ENCODE measurements at regions of chr3 and their contacts with region 1.

Region 1: DNA sequence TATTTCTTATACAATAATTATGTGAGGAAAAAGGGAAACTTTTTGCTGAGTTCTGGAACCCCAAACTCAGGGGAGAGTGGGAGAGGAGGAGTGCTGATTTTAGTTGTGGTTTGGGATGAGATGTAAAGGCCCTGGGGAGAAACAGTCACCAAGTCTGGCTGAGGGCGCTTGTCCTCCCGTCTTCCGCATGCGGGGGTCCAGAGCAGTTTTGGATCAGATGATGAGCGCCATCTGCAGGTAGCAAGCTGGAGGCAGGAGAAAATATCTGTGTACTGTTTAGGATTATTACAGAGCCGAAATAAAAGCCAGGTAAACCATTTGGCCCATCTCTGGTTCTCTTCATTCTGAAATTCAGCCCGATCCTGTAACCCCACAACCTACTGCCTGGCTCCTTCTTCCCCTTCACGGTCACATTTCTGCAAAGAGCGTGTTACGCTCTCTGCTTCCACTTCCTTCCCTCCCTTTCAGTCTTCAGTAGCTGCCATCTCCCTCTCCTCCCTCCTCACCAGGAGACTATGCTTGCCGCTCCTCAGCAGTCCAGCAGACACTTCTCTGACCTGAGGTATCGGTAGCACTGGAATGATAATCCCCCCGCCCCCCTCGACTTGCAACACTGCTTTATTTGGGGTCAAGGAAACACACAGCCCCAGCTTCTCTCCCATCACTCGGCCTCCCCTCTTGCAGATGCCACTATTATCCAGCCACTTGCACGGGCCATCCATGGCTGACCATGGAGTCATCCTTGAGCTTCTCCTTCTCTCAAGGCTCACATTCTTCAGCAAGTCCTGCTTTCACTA is 1.4 kb upstream of the PARP14 start:
- DNase-seq: peak; percentile 64
- ATAC-seq: peak; percentile 79
- H3K4me3 ChIP-seq: peak overlapping the region; percentile 90 to 97 (median 93)
- H3K27ac ChIP-seq: no peak overlapping the region
- H3K4me1 ChIP-seq: peaks cover 29% of the 10 kb centered on the region
- H3K27me3 ChIP-seq: no peaks in the 10 kb centered on the region; a peak in 1 of 5 replicates
- CTCF ChIP-seq: peak; percentile 88
- EP300 ChIP-seq: no peak
- POLR2A ChIP-seq: no peak
- RAD21 ChIP-seq: peak; percentile 83

Region 2: GRCh38 chr3:121574449-121574848 is 1104.8 kb before region 1 on chr3:
- CTCF ChIA-PET with region 1: no interaction called
- POLR2A ChIA-PET with region 1: no interaction called
- in situ Hi-C with region 1: loop called (anchors 25 kb)
- intact Hi-C with region 1: no loop called
- DNase-seq: peak; percentile 58
- ATAC-seq: peak; percentile 77
- H3K4me3 ChIP-seq: no peak overlapping the region
- H3K27ac ChIP-seq: no peak overlapping the region
- H3K4me1 ChIP-seq: no peaks in the 10 kb centered on the region
- H3K27me3 ChIP-seq: no peaks in the 10 kb centered on the region
- CTCF ChIP-seq: no peak
- EP300 ChIP-seq: no peak
- POLR2A ChIP-seq: no peak
- RAD21 ChIP-seq: no peak

Region 3: DNA sequence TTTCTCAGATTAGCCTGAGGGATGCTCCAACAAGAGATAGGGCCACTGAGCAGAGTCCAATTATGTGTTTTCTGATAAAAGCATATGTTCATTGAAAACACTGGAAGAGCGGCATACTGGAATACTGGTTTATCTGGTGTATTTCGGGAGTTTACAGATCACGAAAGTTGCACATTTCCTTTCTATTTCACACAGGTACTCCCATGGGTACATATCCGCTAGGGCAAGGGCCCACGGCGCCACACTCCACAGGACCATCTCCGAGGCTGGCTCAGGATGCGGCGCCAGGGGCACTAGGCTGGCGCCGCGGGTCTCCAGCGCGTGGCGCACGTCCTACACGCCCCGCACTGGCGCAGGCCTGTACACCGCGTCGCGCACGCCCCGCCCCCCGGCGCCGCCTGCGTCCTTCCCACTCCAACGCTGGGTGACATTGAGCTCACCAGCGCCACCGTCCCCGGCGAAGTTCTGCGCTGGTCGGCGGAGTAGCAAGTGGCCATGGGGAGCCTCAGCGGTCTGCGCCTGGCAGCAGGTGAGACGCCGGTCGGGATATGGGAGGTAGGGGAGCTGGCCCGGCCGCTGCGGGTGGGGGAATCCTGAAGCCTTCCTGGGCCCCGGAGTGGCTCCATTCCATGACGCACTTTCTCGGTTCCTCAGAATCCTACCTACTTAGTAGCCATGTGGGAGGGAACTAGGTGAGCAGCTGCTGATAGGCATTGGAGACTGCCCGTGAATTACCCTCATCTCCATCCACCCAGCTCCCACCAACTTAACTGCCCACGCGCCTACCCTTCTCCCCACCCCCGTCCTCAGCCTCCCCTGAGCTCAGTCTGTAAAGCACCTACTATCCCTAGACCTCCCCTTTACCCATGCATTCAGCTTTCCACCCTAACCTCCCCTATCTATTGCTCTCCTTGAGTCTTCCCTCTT is 295.2 kb before region 1 on chr3 and contains the start of gene FAM162A:
- CTCF ChIA-PET with region 1: no interaction called
- POLR2A ChIA-PET with region 1: interaction called, 11 read pairs
- in situ Hi-C with region 1: no loop called
- intact Hi-C with region 1: no loop called
- DNase-seq: peak; percentile 90
- ATAC-seq: peak; percentile 97
- H3K4me3 ChIP-seq: peak within 1 kb of the TSS; percentile 83 to 96 (median 84)
- H3K27ac ChIP-seq: peak within 1 kb of the TSS; percentile 88
- H3K4me1 ChIP-seq: peaks cover 73% of the 10 kb centered on the region
- H3K27me3 ChIP-seq: no peaks in the 10 kb centered on the region; a peak in 1 of 5 replicates
- CTCF ChIP-seq: peak; percentile 96
- EP300 ChIP-seq: 0 out of 4 replicates have a peak, but pooled peaks of 1 of the 2 experiments have one; percentile 20
- POLR2A ChIP-seq: peak; percentile 87 to 95
- RAD21 ChIP-seq: peak; percentile 84
- total RNA-seq, gene FAM162A: 115 and 131 TPM in 2 replicates

Region 4: DNA sequence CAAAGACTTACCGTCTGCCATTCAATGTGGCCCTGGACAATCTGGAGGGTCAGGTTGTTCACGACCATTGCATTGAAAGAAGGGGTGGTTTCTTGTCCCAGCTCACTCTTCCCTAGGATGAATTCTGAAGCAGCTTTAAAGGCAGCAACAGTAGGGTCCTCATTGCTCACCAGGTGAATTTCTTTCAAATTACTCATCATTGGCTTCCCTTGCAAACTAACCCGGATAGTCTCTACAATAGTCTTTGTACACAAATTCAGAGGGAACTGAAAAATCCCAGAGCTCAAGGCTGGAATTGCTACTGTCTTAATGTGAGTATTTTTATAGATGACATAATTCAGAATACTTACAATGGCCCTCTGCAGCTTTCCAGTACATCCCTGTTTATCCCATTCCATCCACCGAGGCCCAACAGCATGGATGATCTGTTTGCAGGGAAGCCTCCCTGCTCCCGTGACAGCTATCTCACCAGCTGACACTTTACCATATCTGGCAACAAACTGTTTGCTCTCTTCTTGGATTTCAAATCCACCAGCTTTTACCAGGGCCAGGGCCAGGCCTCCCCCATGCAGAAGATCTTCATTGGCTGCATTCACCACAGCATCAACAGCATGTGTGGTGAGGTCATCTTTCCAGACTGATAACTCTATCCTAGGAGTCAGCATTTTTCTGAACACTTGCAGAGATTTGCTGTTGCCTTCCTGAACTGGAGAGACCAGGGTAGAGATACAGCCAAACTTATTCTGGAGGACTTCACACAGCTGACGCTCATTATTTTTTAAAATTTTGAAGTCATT is 123.8 kb before region 1 on chr3:
- CTCF ChIA-PET with region 1: interaction called, 39 read pairs
- POLR2A ChIA-PET with region 1: interaction called, 3 read pairs
- in situ Hi-C with region 1: loop called (anchors 5 kb)
- intact Hi-C with region 1: loop called (anchors 1 kb)
- DNase-seq: no peak
- ATAC-seq: no peak
- H3K4me3 ChIP-seq: no peak overlapping the region
- H3K27ac ChIP-seq: no peak overlapping the region
- H3K4me1 ChIP-seq: peaks cover 11% of the 10 kb centered on the region
- H3K27me3 ChIP-seq: no peaks in the 10 kb centered on the region
- CTCF ChIP-seq: no peak
- EP300 ChIP-seq: no peak
- POLR2A ChIP-seq: no peak
- RAD21 ChIP-seq: no peak

Region 5: DNA sequence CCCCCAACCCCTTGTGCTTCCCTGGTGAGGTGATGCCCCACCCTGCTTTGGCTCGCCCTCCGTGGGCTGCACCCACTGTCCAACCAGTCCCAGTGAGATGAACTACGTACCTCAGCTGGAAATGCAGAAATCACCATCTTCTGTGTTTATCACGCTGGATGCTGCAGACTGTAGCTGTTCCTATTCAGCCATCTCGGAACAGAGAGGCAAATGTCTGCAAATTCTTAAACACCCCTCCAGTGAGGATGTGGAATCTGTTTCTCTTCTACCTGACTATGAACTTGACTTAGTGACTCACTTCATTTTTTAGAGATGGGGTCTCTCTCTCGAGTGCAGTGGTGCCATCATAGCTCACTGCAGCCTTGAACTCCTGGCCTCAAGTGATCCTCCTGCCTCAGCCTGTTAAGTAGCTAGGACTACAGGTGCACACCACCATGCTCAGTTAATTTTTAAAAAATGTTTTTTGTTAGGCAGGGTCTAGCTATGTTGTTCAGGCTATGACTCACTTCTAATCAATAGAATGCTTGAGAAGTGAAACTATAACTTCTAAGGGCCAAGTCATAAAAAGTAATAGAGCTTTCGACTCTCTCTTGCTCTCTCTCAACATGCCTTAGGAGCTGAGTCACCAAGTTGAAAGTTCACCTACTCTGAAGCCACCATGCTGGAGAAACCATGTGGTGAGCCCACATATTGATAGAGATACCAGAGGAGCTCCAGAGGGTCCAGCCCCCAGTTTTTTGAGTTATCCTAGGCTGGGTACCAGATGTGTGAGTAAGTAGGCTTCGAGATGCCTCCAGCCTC is 10.2 kb before region 1 on chr3:
- CTCF ChIA-PET with region 1: no interaction called
- POLR2A ChIA-PET with region 1: interaction called, 29 read pairs
- in situ Hi-C with region 1: no loop called
- intact Hi-C with region 1: no loop called
- DNase-seq: peak; percentile 50
- ATAC-seq: peak; percentile 85
- H3K4me3 ChIP-seq: no peak overlapping the region
- H3K27ac ChIP-seq: no peak overlapping the region
- H3K4me1 ChIP-seq: peaks cover 16% of the 10 kb centered on the region
- H3K27me3 ChIP-seq: no peaks in the 10 kb centered on the region
- CTCF ChIP-seq: no peak
- EP300 ChIP-seq: no peak
- POLR2A ChIP-seq: no peak
- RAD21 ChIP-seq: no peak

Region 6: GRCh38 chr3:122727294-122727693 is 48.0 kb after region 1 on chr3:
- CTCF ChIA-PET with region 1: no interaction called
- POLR2A ChIA-PET with region 1: no interaction called
- in situ Hi-C with region 1: no loop called
- intact Hi-C with region 1: no loop called
- DNase-seq: no peak
- ATAC-seq: no peak
- H3K4me3 ChIP-seq: no peak overlapping the region
- H3K27ac ChIP-seq: no peak overlapping the region
- H3K4me1 ChIP-seq: no peaks in the 10 kb centered on the region
- H3K27me3 ChIP-seq: no peaks in the 10 kb centered on the region
- CTCF ChIP-seq: no peak
- EP300 ChIP-seq: no peak
- POLR2A ChIP-seq: no peak
- RAD21 ChIP-seq: no peak